Esophagus muscularis mucosa (tissue), 4 donors: ENCODE measurements at regions of chr6 and their contacts with region 1.

Region 1: GRCh38 chr6:41505122-41506049 is 40.8 kb upstream of the FOXP4 start:
- DNase-seq: peak; percentile 93
- H3K4me3 ChIP-seq: peak overlapping the region; percentile 46 to 60 (median 50)
- H3K27ac ChIP-seq: peak overlapping the region; percentile 73 to 80 (median 78)
- H3K4me1 ChIP-seq: peaks cover 20 to 40% (median 35%) of the 10 kb centered on the region in 4 donors
- H3K27me3 ChIP-seq: peaks cover 0 to 21% (median 0%) of the 10 kb centered on the region in 4 donors
- CTCF ChIP-seq: no peak
- EP300 ChIP-seq: no peak
- POLR2A ChIP-seq: no peak

Region 2: GRCh38 chr6:41449399-41450245 is 55.8 kb before region 1 on chr6:
- intact Hi-C with region 1: loop called (anchors 5 kb)
- DNase-seq: no peak
- H3K4me3 ChIP-seq: no peak overlapping the region
- H3K27ac ChIP-seq: peak overlapping the region; percentile 30 to 76 (median 62)
- H3K4me1 ChIP-seq: peaks cover 33 to 58% (median 50%) of the 10 kb centered on the region in 4 donors
- H3K27me3 ChIP-seq: no peaks in the 10 kb centered on the region
- CTCF ChIP-seq: no peak
- EP300 ChIP-seq: no peak
- POLR2A ChIP-seq: no peak

Region 3: GRCh38 chr6:41545703-41546474 is 40.5 kb after region 1 on chr6 and contains the start of gene FOXP4:
- intact Hi-C with region 1: loop called (anchors 5 kb)
- DNase-seq: peak; percentile 97
- H3K4me3 ChIP-seq: peak within 1 kb of the TSS; percentile 85 to 98 (median 93)
- H3K27ac ChIP-seq: peak within 1 kb of the TSS; percentile 85 to 92 (median 88)
- H3K4me1 ChIP-seq: peaks cover 38 to 54% (median 49%) of the 10 kb centered on the region in 4 donors
- H3K27me3 ChIP-seq: peaks cover 0 to 4% (median 0%) of the 10 kb centered on the region in 4 donors
- CTCF ChIP-seq: no peak
- EP300 ChIP-seq: no peak
- POLR2A ChIP-seq: no peak
- total RNA-seq, gene FOXP4: 10.8 to 30.7 (median 17.7) TPM